Endothelial cell of umbilical vein (primary cell): ENCODE measurements at regions of chr1 and their contacts with region 1.

Region 1: GRCh38 chr1:155017041-155017945 is 14.7 kb downstream of the ZBTB7B start:
- DNase-seq: peak; percentile 95
- H3K4me3 ChIP-seq: peak overlapping the region in 1 of 3 experiments; percentile 39
- H3K27ac ChIP-seq: peak overlapping the region; percentile 36
- H3K4me1 ChIP-seq: peaks cover 9% of the 10 kb centered on the region
- H3K27me3 ChIP-seq: no peaks in the 10 kb centered on the region
- CTCF ChIP-seq: peak; percentile 100
- POLR2A ChIP-seq: peak; percentile 57

Region 2: GRCh38 chr1:154936555-154937084 is 80.7 kb before region 1 on chr1 and contains the start of gene PMVK:
- CTCF ChIA-PET with region 1: interaction called, 16 read pairs
- POLR2A ChIA-PET with region 1: no interaction called
- dilution Hi-C with region 1: no loop called
- intact Hi-C with region 1: no loop called
- DNase-seq: peak; percentile 94
- H3K4me3 ChIP-seq: peak within 1 kb of the TSS; percentile 26 to 79 (median 55)
- H3K27ac ChIP-seq: peak within 1 kb of the TSS; percentile 92
- H3K4me1 ChIP-seq: peaks cover 8% of the 10 kb centered on the region
- H3K27me3 ChIP-seq: no peaks in the 10 kb centered on the region
- CTCF ChIP-seq: peak in 1 of 2 donors; percentile 36
- POLR2A ChIP-seq: peak; percentile 73
- total RNA-seq, gene PMVK: 22.6 and 23.0 TPM in 2 replicates

Region 3: DNA sequence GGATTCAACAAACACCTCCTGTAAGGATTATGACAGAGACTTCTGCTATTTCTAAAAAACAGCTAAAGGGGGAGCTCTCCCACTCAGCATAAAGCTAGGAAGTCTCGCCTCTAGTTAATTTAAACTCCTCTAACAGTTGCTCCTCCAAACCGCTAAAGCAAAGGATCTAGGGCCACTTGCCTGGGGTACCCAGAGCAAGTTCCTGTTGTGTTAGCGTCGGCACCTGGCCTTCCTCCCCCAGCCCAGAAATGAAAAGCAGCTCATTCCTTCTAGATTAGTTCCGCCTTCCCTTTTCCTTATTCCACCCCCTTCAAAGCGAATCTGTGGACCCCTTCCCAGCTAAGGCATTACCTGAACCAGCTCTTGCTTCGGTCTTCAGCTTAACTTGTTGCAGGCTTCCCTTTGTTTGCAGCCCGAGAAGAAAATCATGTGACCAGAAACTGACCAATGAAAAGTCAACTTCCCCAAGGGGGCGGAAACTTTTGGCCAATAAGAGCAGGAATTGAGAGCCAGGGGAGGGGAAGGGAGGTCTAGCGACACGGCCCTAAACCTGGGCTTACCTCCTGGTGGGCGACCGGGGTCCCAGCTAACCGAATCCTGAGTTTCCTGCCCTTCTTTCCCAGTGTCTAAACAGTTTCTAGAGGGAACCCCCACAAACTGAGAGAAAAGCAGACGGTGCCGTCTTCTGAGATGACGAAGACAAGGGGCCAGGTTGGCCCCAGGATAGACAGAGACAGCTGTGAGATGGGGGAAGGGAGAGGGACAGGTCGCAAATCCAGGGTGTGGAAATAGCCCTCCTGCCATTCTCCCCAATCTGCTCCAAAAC is 61.4 kb before region 1 on chr1 and contains the start of gene PBXIP1:
- CTCF ChIA-PET with region 1: interaction called, 37 read pairs
- POLR2A ChIA-PET with region 1: no interaction called
- dilution Hi-C with region 1: no loop called
- intact Hi-C with region 1: loop called (anchors 1 kb)
- DNase-seq: peak; percentile 98
- H3K4me3 ChIP-seq: peak within 1 kb of the TSS; percentile 19 to 76 (median 57)
- H3K27ac ChIP-seq: peak within 1 kb of the TSS; percentile 69
- H3K4me1 ChIP-seq: peaks cover 26% of the 10 kb centered on the region
- H3K27me3 ChIP-seq: no peaks in the 10 kb centered on the region
- CTCF ChIP-seq: peak; percentile 12 to 33
- POLR2A ChIP-seq: no peak
- total RNA-seq, gene PBXIP1: 49.0 and 49.4 TPM in 2 replicates

Region 4: DNA sequence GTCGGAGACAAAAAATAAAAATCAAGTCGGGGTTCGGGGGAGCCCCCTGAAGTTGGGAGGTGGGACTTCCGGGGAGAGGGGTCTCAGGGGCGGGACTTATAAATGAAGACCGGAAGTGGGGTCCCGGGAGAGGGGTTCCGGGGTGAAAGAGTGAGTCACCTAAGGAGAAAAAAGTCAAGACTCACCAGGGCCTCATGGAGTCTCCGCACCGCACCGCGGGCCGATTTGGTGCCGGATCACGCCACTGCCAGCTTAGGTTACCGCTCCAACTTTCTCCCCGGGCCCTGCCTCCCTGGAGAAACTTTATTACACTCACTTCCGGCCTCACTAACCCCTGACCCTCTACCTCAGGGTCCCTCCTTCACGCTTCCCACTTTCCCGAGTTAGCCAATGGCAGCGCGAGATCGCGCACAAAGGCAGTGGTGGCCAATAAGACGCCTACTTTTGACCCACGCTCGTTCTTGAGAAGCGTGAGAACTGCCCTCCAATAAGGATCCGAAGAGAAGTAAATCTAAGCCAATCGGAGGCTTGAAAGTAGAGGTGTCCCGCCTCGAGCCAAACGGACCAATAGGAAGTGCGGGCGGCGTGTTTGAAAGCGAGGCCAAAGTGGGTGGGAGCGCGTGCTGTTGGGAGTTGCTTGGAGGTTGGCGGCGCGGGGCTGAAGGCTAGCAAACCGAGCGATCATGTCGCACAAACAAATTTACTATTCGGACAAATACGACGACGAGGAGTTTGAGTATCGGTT is 43.1 kb before region 1 on chr1 and contains the start of gene CKS1B:
- CTCF ChIA-PET with region 1: interaction called, 41 read pairs
- POLR2A ChIA-PET with region 1: interaction called, 3 read pairs
- dilution Hi-C with region 1: no loop called
- intact Hi-C with region 1: loop called (anchors 1 kb)
- DNase-seq: peak; percentile 100
- H3K4me3 ChIP-seq: peak within 1 kb of the TSS; percentile 64 to 88 (median 87)
- H3K27ac ChIP-seq: peak within 1 kb of the TSS; percentile 99
- H3K4me1 ChIP-seq: peaks cover 36% of the 10 kb centered on the region
- H3K27me3 ChIP-seq: no peaks in the 10 kb centered on the region
- CTCF ChIP-seq: no peak
- POLR2A ChIP-seq: peak; percentile 60
- total RNA-seq, gene CKS1B: 126 and 128 TPM in 2 replicates

Region 5: GRCh38 chr1:155001675-155002463 is 15.4 kb before region 1 on chr1:
- CTCF ChIA-PET with region 1: interaction called, 87 read pairs
- POLR2A ChIA-PET with region 1: interaction called, 3 read pairs
- dilution Hi-C with region 1: no loop called
- intact Hi-C with region 1: loop called (anchors 1 kb)
- DNase-seq: peak; percentile 99
- H3K4me3 ChIP-seq: peak overlapping the region; percentile 57 to 94 (median 61)
- H3K27ac ChIP-seq: peak overlapping the region; percentile 26
- H3K4me1 ChIP-seq: peaks cover 25% of the 10 kb centered on the region
- H3K27me3 ChIP-seq: no peaks in the 10 kb centered on the region
- CTCF ChIP-seq: peak; percentile 12 to 63
- POLR2A ChIP-seq: no peak

Region 6: DNA sequence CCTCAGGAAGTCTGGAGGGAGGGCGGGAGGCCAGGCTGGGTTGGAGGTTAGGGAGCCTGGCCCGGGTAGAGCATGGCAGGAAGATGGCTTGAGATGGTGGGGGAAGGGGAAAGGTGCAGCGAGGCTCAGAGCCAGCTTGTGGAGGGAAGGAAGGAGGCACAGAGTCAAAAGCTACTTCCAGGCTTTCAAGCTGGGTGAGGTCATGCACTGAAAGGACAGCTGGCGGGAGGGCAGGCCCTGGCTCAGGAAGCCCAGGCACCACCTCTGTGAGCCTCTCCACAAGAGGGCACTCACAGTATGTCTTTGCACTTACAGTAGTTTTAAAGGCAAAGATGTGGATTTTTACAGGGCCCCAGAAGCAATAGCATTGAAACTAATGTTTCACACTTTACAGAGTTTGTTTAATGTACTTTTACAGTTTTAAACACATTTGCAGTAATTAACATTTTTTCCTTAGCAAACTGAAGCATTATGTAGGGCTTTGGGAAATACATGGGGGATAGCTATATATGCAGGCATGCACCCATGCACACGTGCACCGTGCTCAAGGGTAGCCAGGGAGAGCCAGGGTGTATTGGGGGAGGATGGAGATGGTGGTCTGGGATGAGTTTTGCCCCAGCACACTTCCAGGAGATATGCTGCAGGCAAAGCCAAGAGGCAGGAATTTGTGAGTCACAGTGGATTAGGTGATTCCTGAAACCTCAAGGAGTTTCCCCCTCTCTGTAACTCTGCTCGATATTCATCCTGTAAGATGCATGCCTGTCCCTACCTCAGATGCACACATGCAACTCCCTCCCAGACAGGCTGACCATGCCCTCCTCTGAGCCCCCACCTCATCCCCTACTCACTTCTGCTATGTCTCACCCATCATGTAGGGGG is 27.8 kb after region 1 on chr1:
- CTCF ChIA-PET with region 1: interaction called, 38 read pairs
- POLR2A ChIA-PET with region 1: no interaction called
- dilution Hi-C with region 1: no loop called
- intact Hi-C with region 1: loop called (anchors 1 kb)
- DNase-seq: peak; percentile 79
- H3K4me3 ChIP-seq: no peak overlapping the region
- H3K27ac ChIP-seq: no peak overlapping the region
- H3K4me1 ChIP-seq: peaks cover 18% of the 10 kb centered on the region
- H3K27me3 ChIP-seq: no peaks in the 10 kb centered on the region
- CTCF ChIP-seq: peak; percentile 79 to 89
- POLR2A ChIP-seq: no peak

Region 7: GRCh38 chr1:155063550-155064110 is 46.3 kb after region 1 on chr1 and contains the start of gene EFNA4:
- CTCF ChIA-PET with region 1: interaction called, 23 read pairs
- POLR2A ChIA-PET with region 1: no interaction called
- dilution Hi-C with region 1: no loop called
- intact Hi-C with region 1: no loop called
- DNase-seq: peak; percentile 89
- H3K4me3 ChIP-seq: peak within 1 kb of the TSS; percentile 66 to 98 (median 85)
- H3K27ac ChIP-seq: peak within 1 kb of the TSS; percentile 36
- H3K4me1 ChIP-seq: peaks cover 10% of the 10 kb centered on the region
- H3K27me3 ChIP-seq: no peaks in the 10 kb centered on the region
- CTCF ChIP-seq: no peak
- POLR2A ChIP-seq: peak; percentile 89
- total RNA-seq, gene EFNA4: 16.5 and 17.5 TPM in 2 replicates